ENCODE measurements at regions of chr9 and their contacts with region 1.

Region 1: DNA sequence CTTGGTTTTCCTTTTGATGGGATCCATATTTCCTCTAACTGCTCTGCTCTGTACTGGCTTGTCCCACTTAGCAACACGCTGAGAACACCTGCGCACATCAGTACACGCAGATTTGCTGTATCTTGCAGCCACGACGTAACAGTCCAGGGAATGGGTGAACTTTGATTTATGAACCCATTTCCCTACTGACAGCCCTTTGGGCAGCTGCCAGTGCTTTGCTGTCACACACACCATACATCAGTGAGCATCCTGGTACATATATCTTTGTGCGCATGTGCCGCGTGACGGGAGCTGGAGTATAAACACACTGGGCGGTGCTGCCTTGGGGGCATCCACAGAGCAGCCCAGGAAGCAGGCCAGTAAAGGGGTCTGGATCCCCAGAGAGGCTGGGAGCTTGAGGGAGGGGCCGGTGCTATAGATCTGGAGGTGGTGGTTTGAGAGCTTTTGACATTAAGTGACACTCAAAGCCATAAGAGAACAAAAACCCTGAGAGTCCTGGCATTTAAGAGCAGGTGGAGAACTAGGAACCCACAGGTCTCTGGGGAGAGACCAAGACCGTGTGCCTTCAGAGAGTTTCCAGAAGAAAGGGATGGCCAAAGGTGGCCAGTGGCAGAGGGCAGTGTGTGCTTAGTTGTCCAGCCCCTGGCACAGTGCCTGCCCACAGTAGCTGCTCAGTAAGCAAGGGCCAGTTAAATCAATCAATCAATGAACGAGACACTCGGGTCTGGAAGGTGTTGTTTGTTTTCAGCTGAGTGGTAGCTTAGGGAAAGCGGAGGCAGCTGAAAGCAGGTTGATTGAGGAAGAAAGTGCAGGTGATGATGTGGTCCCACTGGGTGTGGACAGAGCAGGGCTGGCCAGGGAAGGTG is 53.7 kb downstream of the LMX1B start:
- DNase-seq: no peak
- H3K27ac ChIP-seq: no peak overlapping the region
- CTCF ChIP-seq: no peak

Region 2: DNA sequence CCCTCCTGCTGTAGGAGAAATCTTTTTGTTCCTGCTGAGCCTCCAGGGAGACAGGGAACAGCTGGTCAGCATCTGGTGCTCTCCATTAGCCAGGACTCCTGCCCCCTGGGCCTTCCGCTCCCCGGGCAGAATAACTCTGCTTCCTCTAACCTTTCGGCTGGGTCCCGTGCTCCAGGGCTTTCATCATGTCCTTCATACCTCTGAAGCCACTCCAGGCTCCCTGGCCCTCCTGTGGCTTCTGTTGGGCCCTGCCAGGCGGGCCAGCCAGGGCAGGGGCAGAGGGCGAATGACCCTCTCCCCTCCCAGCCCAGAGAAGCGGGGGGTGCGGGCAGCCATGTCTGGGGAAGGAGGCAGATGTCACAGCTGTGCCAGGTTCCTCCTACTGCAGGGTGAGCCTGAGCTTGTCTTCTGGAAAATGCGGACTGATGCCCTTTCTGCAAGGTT is 135.4 kb before region 1 on chr9:
- CTCF ChIA-PET with region 1: no interaction called
- POLR2A ChIA-PET with region 1: no interaction called
- DNase-seq: no peak
- H3K27ac ChIP-seq: no peak overlapping the region
- CTCF ChIP-seq: no peak

Region 3: DNA sequence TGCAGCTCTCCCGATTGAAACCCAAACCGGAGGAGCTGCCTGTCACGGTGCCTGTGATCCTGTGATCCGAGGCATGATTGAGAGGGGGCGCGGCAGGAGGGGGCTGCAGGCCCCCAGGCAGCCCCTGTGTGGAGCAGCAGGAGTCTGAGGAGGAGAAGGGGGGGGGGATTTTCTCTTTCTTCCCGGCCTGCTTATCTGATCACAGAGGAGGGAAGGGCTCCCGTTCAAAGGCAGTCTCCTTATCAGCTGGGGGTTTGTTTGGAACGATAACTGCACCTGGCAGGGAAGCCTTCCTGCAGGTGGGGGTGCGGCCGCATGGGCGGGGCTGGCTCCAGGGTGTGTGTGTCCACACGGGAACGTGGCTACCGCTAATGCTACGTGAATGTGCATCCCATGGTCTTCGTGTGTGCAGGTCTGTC is 15.3 kb before region 1 on chr9:
- CTCF ChIA-PET with region 1: interaction called, 10 read pairs
- POLR2A ChIA-PET with region 1: no interaction called
- DNase-seq: no peak
- H3K27ac ChIP-seq: no peak overlapping the region
- CTCF ChIP-seq: no peak